ENCODE measurements at regions of chr19 and their contacts with region 1.

Region 1: DNA sequence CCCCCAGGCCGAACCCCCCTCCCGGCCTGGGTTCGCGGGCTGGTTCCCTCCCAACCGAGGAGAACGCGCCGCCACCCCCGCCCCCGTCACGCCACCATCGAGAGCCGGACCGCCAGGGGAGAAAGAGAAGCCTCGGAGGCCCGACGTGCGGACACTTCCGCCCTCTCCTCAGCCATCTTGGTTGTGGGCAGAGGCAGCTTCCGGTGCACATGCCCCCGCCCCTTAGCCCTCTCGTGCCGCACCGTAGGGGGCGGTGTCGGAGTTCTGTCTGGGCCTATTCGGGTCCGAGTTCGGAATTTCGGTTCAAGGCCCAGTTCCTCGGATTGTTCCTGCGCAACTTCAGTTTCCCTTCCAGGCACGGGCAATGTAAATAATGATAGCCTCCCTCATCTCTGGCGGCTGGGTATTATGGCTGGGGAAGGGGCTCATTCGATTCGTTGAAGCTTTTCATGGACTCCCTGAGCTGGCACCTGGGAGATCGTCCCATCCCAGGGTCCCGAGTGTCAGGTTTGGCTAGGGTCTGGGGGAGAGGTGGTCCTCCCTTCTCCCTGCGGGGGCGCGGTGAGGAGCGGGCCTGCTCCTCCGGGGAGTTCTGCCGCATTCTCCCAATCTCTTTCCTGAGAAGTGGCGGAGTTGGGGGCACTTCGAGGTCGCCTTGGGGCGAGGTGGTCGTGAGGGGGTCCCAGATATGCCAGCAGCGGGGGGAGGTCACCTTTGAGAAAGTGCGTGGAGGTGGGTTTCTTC is at the starts of genes IER2 and STX10:
- DNase-seq: peak; percentile 94 to 97 (median 96)
- H3K4me3 ChIP-seq: peak within 1 kb of the TSS; percentile 86 to 100 (median 96)
- H3K4me3 Mint-ChIP-seq: peak within 1 kb of the TSS; percentile 98 to 99
- H3K27ac ChIP-seq: peak within 1 kb of the TSS; percentile 95 to 97
- H3K27ac Mint-ChIP-seq: peak within 1 kb of the TSS; percentile 98 to 99 (median 99)
- H3K4me1 ChIP-seq: peaks cover 31 to 46% of the 10 kb centered on the region in 2 donors
- H3K4me1 Mint-ChIP-seq: peaks cover 33% of the 10 kb centered on the region
- H3K27me3 ChIP-seq: no peaks in the 10 kb centered on the region
- H3K27me3 Mint-ChIP-seq: peaks cover 0 to 15% (median 4%) of the 10 kb centered on the region in 3 donors
- CTCF ChIP-seq: peak; percentile 43
- polyA plus RNA-seq, gene IER2: 355 to 804 (median 601) TPM
- polyA plus RNA-seq, gene STX10: 158 to 392 (median 172) TPM

Region 2: DNA sequence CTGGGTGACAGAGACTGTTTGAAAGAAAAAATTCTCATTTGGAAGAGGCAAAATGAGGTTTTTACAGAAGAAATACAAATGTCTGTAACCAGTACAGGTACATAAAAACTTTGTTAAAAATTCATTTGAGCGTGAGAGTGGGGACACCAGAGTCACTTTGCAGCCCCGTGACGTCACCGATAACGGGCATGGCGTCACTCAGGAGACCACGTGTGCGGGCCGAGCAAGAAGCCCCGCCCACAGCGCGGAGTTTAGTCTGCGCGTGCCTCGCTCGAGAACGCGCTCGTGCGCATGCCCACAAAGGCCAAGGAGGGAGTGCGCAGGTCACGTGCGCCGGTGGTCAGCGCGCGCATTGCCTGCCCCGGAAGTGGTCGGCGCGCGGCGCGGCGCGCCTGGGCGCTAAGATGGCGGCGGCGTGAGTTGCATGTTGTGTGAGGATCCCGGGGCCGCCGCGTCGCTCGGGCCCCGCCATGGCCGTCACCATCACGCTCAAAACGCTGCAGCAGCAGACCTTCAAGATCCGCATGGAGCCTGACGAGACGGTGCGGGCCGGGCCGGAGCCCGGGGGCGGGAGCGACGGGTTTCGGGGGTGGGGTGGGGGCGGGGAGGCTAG is 204.8 kb before region 1 on chr19 and contains the start of gene RAD23A:
- intact Hi-C with region 1: loop called in 1 of 2 experiments (anchors 5 kb)
- DNase-seq: peak; percentile 98 to 99 (median 99)
- H3K4me3 ChIP-seq: peak within 1 kb of the TSS; percentile 50 to 95 (median 77)
- H3K4me3 Mint-ChIP-seq: peak within 1 kb of the TSS; percentile 86 to 91
- H3K27ac ChIP-seq: peak within 1 kb of the TSS; percentile 78 to 93
- H3K27ac Mint-ChIP-seq: peak within 1 kb of the TSS; percentile 91 to 95 (median 94)
- H3K4me1 ChIP-seq: peaks cover 30 to 62% of the 10 kb centered on the region in 2 donors
- H3K4me1 Mint-ChIP-seq: peaks cover 46% of the 10 kb centered on the region
- H3K27me3 ChIP-seq: no peaks in the 10 kb centered on the region
- H3K27me3 Mint-ChIP-seq: no peaks in the 10 kb centered on the region
- CTCF ChIP-seq: no peak
- polyA plus RNA-seq, gene RAD23A: 45.5 to 88.0 (median 55.3) TPM

Region 3: DNA sequence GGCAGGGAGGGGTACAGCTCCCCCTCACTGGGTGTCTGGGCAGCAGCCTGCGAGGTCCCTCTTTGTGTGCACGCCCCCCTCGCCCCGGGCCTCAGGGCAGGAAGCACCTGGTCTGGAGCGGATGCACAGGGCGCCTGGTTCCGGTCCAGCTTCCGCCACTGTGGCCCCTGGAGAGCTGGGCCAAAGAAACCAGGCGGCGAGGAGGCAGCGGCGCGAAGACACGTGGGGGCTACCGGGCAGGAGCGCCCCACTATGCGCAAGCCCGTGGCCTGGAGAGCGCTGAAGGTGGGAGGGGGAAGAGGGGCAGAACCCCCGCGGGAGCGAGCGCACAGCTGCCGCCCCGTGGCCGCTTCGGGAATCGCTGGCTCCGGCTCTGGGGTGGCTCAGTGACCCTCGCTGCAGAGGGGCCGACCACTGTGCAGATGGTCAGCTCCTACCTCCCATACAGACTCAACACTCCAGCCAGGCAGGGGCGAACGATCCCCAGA is 46.0 kb before region 1 on chr19:
- intact Hi-C with region 1: loop called (anchors 5 kb)
- DNase-seq: peak; percentile 54 to 67 (median 67)
- H3K4me3 ChIP-seq: peak overlapping the region; percentile 61 to 92 (median 84)
- H3K4me3 Mint-ChIP-seq: peak overlapping the region; percentile 91 to 98
- H3K27ac ChIP-seq: peak overlapping the region; percentile 90 to 98
- H3K27ac Mint-ChIP-seq: peak overlapping the region; percentile 89 to 97 (median 95)
- H3K4me1 ChIP-seq: peaks cover 60 to 70% of the 10 kb centered on the region in 2 donors
- H3K4me1 Mint-ChIP-seq: peaks cover 52% of the 10 kb centered on the region
- H3K27me3 ChIP-seq: no peaks in the 10 kb centered on the region
- H3K27me3 Mint-ChIP-seq: peaks cover 0 to 1% (median 0%) of the 10 kb centered on the region in 3 donors
- CTCF ChIP-seq: peak; percentile 98

Region 4: GRCh38 chr19:13117772-13118423 is 32.5 kb before region 1 on chr19 and contains the start of gene NACC1:
- intact Hi-C with region 1: loop called in 1 of 2 experiments (anchors 5 kb)
- DNase-seq: peak; percentile 66 to 80 (median 77)
- H3K4me3 ChIP-seq: peak within 1 kb of the TSS; percentile 82 to 98 (median 92)
- H3K4me3 Mint-ChIP-seq: peak within 1 kb of the TSS; percentile 91 to 95
- H3K27ac ChIP-seq: peak within 1 kb of the TSS; percentile 9 to 70
- H3K27ac Mint-ChIP-seq: peak within 1 kb of the TSS; percentile 83 to 95 (median 89)
- H3K4me1 ChIP-seq: peaks cover 37 to 50% of the 10 kb centered on the region in 2 donors
- H3K4me1 Mint-ChIP-seq: peaks cover 55% of the 10 kb centered on the region
- H3K27me3 ChIP-seq: no peaks in the 10 kb centered on the region
- H3K27me3 Mint-ChIP-seq: peaks cover 0 to 3% (median 0%) of the 10 kb centered on the region in 3 donors
- CTCF ChIP-seq: no peak
- polyA plus RNA-seq, gene NACC1: 1.1 to 20.1 (median 2.2) TPM

Region 5: GRCh38 chr19:13162518-13163314 is 12.4 kb after region 1 on chr19:
- intact Hi-C with region 1: loop called in 1 of 2 experiments (anchors 2 kb)
- DNase-seq: peak; percentile 87 to 91 (median 87)
- H3K4me3 ChIP-seq: peak overlapping the region; percentile 39 to 83 (median 47)
- H3K4me3 Mint-ChIP-seq: peak overlapping the region; percentile 76 to 87
- H3K27ac ChIP-seq: peak overlapping the region; percentile 65 to 90
- H3K27ac Mint-ChIP-seq: peak overlapping the region; percentile 86 to 98 (median 89)
- H3K4me1 ChIP-seq: peaks cover 62 to 79% of the 10 kb centered on the region in 2 donors
- H3K4me1 Mint-ChIP-seq: peaks cover 65% of the 10 kb centered on the region
- H3K27me3 ChIP-seq: no peaks in the 10 kb centered on the region
- H3K27me3 Mint-ChIP-seq: no peaks in the 10 kb centered on the region
- CTCF ChIP-seq: no peak

Region 6: GRCh38 chr19:13234518-13234917 is 84.2 kb after region 1 on chr19:
- intact Hi-C with region 1: no loop called
- DNase-seq: peak in 2 of 3 donors; percentile 46 to 59
- H3K4me3 ChIP-seq: no peak overlapping the region
- H3K4me3 Mint-ChIP-seq: peak overlapping the region; percentile 35 to 47
- H3K27ac ChIP-seq: no peak overlapping the region
- H3K27ac Mint-ChIP-seq: no peak overlapping the region
- H3K4me1 ChIP-seq: peaks cover 7 to 8% of the 10 kb centered on the region in 2 donors
- H3K4me1 Mint-ChIP-seq: peaks cover 8% of the 10 kb centered on the region
- H3K27me3 ChIP-seq: no peaks in the 10 kb centered on the region
- H3K27me3 Mint-ChIP-seq: peaks cover 7 to 19% (median 8%) of the 10 kb centered on the region in 3 donors
- CTCF ChIP-seq: peak; percentile 87

Region 7: GRCh38 chr19:13846557-13847406 is 696.4 kb after region 1 on chr19:
- intact Hi-C with region 1: loop called in 1 of 2 experiments (anchors 10 kb)
- DNase-seq: peak; percentile 98 to 99 (median 99)
- H3K4me3 ChIP-seq: peak overlapping the region; percentile 39 to 65 (median 63)
- H3K4me3 Mint-ChIP-seq: peak overlapping the region; percentile 78 to 85
- H3K27ac ChIP-seq: peak overlapping the region; percentile 99
- H3K27ac Mint-ChIP-seq: peak overlapping the region; percentile 99 to 100 (median 100)
- H3K4me1 ChIP-seq: peaks cover 67 to 68% of the 10 kb centered on the region in 2 donors
- H3K4me1 Mint-ChIP-seq: peaks cover 66% of the 10 kb centered on the region
- H3K27me3 ChIP-seq: no peaks in the 10 kb centered on the region
- H3K27me3 Mint-ChIP-seq: peaks cover 0 to 5% (median 0%) of the 10 kb centered on the region in 3 donors
- CTCF ChIP-seq: no peak